Activated naive CD4-positive, alpha-beta T cell treated with anti-CD3 and anti-CD28 coated beads for 36 hours (primary cell): ENCODE measurements at regions of chr16 and their contacts with region 1.

Region 1: GRCh38 chr16:89115216-89115861 is 21.7 kb downstream of the ACSF3 start:
- DNase-seq: peak; percentile 90
- H3K4me3 Mint-ChIP-seq: peak overlapping the region; percentile 63
- H3K27ac Mint-ChIP-seq: peak overlapping the region; percentile 90
- H3K4me1 Mint-ChIP-seq: peaks cover 41% of the 10 kb centered on the region
- H3K27me3 Mint-ChIP-seq: no peaks in the 10 kb centered on the region

Region 2: GRCh38 chr16:88941913-88942909 is 173.1 kb before region 1 on chr16:
- CTCF ChIA-PET with region 1: no interaction called
- intact Hi-C with region 1: loop called (anchors 5 kb)
- DNase-seq: peak; percentile 61
- H3K4me3 Mint-ChIP-seq: peak overlapping the region; percentile 38
- H3K27ac Mint-ChIP-seq: no peak overlapping the region
- H3K4me1 Mint-ChIP-seq: peaks cover 2% of the 10 kb centered on the region
- H3K27me3 Mint-ChIP-seq: peaks cover 30% of the 10 kb centered on the region

Region 3: DNA sequence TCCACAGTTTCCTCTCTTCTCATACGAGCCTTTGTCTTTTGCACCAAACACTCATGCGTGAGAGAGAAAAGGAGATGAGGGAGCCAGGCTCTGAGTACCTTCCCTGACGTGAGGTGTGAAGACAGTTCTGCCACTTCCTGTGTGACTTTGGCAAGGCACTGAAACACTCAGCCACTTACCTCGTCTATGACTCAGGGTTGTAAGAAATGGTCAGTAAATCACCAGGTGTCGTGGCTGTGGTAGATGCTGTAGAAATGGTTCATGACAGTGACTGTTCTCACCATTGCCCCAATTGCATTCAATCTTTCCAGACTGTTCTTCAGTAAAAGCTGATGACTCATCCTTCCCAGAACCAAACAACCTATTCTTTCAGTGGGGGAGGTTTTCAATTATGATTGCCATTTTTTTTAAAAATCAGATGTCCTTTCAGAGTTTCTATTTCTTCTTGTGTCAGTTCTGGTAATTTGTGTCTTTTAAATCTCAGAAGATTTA is 89.2 kb before region 1 on chr16:
- CTCF ChIA-PET with region 1: no interaction called
- intact Hi-C with region 1: loop called (anchors 2 kb)
- DNase-seq: peak; percentile 85
- H3K4me3 Mint-ChIP-seq: no peak overlapping the region
- H3K27ac Mint-ChIP-seq: peak overlapping the region; percentile 87
- H3K4me1 Mint-ChIP-seq: peaks cover 29% of the 10 kb centered on the region
- H3K27me3 Mint-ChIP-seq: no peaks in the 10 kb centered on the region

Region 4: DNA sequence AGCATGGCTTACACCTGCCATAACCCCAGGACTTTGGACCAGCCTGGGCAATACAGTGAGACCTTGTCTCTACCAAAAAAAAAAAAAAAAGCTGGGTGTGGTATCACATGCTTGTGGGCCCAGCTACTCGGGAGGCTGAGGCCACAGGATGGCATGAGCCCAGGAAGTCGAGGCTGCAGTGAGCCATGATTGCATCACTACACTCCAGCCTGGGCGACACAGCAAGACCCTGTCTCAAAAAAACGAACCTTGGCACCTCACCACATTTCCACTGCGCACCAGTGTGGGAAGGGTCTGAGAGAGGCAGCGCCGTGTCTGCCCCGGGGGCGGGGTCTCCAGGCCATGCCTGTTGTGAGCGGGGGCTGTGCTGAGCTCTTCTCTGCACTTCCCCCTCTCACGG is 15.4 kb before region 1 on chr16:
- CTCF ChIA-PET with region 1: no interaction called
- intact Hi-C with region 1: loop called (anchors 1 kb)
- DNase-seq: no peak
- H3K4me3 Mint-ChIP-seq: no peak overlapping the region
- H3K27ac Mint-ChIP-seq: peak overlapping the region; percentile 44
- H3K4me1 Mint-ChIP-seq: peaks cover 64% of the 10 kb centered on the region
- H3K27me3 Mint-ChIP-seq: no peaks in the 10 kb centered on the region

Region 5: GRCh38 chr16:89319883-89320781 is 204.8 kb after region 1 on chr16:
- CTCF ChIA-PET with region 1: no interaction called
- intact Hi-C with region 1: loop called (anchors 10 kb)
- DNase-seq: peak; percentile 50
- H3K4me3 Mint-ChIP-seq: no peak overlapping the region
- H3K27ac Mint-ChIP-seq: peak overlapping the region; percentile 28
- H3K4me1 Mint-ChIP-seq: peaks cover 98% of the 10 kb centered on the region
- H3K27me3 Mint-ChIP-seq: no peaks in the 10 kb centered on the region

Region 6: GRCh38 chr16:89383082-89384003 is 268.0 kb after region 1 on chr16:
- CTCF ChIA-PET with region 1: no interaction called
- intact Hi-C with region 1: no loop called
- DNase-seq: peak; percentile 42
- H3K4me3 Mint-ChIP-seq: peak overlapping the region; percentile 32
- H3K27ac Mint-ChIP-seq: peak overlapping the region; percentile 71
- H3K4me1 Mint-ChIP-seq: peaks cover 93% of the 10 kb centered on the region
- H3K27me3 Mint-ChIP-seq: no peaks in the 10 kb centered on the region